Endothelial cell of umbilical vein (primary cell): ENCODE measurements at regions of chr2 and their contacts with region 1.

Region 1: GRCh38 chr2:58448065-58448507 is 207.0 kb upstream of the FANCL start:
- DNase-seq: peak; percentile 74
- H3K4me3 ChIP-seq: no peak overlapping the region
- H3K27ac ChIP-seq: no peak overlapping the region
- H3K4me1 ChIP-seq: no peaks in the 10 kb centered on the region
- H3K27me3 ChIP-seq: peaks cover 1 to 6% of the 10 kb centered on the region in 2 experiments
- CTCF ChIP-seq: peak; percentile 36 to 63
- POLR2A ChIP-seq: no peak

Region 2: GRCh38 chr2:57720728-57721627 is 727.1 kb before region 1 on chr2:
- CTCF ChIA-PET with region 1: interaction called, 17 read pairs
- POLR2A ChIA-PET with region 1: no interaction called
- dilution Hi-C with region 1: no loop called
- intact Hi-C with region 1: no loop called
- DNase-seq: peak; percentile 61
- H3K4me3 ChIP-seq: no peak overlapping the region
- H3K27ac ChIP-seq: no peak overlapping the region
- H3K4me1 ChIP-seq: no peaks in the 10 kb centered on the region
- H3K27me3 ChIP-seq: no peaks in the 10 kb centered on the region
- CTCF ChIP-seq: peak; percentile 65 to 80
- POLR2A ChIP-seq: no peak

Region 3: DNA sequence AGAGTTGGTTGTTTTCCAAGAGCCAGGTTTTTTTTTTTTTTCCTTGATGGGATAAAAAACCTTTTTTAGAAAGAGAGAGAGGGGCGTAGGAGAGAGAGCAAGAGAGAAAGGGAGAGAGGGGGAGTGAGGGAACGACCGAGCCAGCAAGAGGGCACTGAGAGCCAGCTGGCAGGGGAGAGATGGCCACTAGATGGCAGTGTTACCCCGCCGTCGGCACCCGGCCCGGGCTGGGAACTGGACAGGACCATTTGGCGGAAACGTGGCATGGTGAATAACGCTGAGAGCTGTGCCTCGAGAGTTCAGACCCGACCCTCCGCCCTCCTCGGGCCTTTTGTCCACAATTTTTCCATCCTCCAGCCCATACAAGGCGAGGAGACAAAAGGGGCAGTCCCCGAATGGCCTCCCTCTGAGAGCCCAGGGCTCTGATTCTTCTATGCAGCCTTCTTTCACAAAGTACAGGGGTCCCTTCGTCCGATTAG is 688.2 kb before region 1 on chr2:
- CTCF ChIA-PET with region 1: interaction called, 67 read pairs
- POLR2A ChIA-PET with region 1: no interaction called
- dilution Hi-C with region 1: no loop called
- intact Hi-C with region 1: loop called (anchors 1 kb)
- DNase-seq: peak; percentile 77
- H3K4me3 ChIP-seq: peak overlapping the region in 1 of 3 experiments; percentile 23
- H3K27ac ChIP-seq: no peak overlapping the region
- H3K4me1 ChIP-seq: peaks cover 4% of the 10 kb centered on the region
- H3K27me3 ChIP-seq: peaks cover 1 to 5% of the 10 kb centered on the region in 2 experiments
- CTCF ChIP-seq: peak; percentile 85 to 96
- POLR2A ChIP-seq: no peak

Region 4: DNA sequence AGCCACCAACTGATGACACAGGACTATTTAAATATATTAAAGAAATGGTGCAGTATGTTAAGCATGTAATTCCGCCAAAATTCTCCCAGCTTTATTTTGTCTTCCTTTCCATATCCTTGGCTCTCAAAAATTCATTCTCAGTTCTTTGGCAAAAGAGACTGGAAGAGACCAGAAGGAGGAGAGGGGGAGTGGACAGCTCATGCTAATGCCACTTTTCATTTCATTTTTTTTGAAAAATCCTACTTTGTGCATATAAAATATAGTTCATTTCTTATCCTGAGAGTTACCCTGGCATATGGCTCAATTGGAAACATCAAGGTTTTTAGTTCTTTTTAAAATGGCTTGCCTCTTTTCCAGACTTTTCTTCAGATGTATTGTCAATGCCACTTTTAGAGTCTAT is 530.0 kb before region 1 on chr2:
- CTCF ChIA-PET with region 1: interaction called, 231 read pairs
- POLR2A ChIA-PET with region 1: no interaction called
- dilution Hi-C with region 1: no loop called
- intact Hi-C with region 1: no loop called
- DNase-seq: no peak
- H3K4me3 ChIP-seq: no peak overlapping the region
- H3K27ac ChIP-seq: no peak overlapping the region
- H3K4me1 ChIP-seq: no peaks in the 10 kb centered on the region
- H3K27me3 ChIP-seq: no peaks in the 10 kb centered on the region
- CTCF ChIP-seq: no peak
- POLR2A ChIP-seq: no peak

Region 5: GRCh38 chr2:58046585-58047372 is 401.3 kb before region 1 on chr2 and contains the start of gene VRK2:
- CTCF ChIA-PET with region 1: no interaction called
- POLR2A ChIA-PET with region 1: no interaction called
- dilution Hi-C with region 1: no loop called
- intact Hi-C with region 1: loop called (anchors 10 kb)
- DNase-seq: peak; percentile 94
- H3K4me3 ChIP-seq: peak within 1 kb of the TSS; percentile 60 to 74 (median 68)
- H3K27ac ChIP-seq: peak within 1 kb of the TSS; percentile 97
- H3K4me1 ChIP-seq: peaks cover 45% of the 10 kb centered on the region
- H3K27me3 ChIP-seq: no peaks in the 10 kb centered on the region
- CTCF ChIP-seq: no peak
- POLR2A ChIP-seq: peak; percentile 92
- total RNA-seq, gene VRK2: 35.2 and 42.0 TPM in 2 replicates

Region 6: DNA sequence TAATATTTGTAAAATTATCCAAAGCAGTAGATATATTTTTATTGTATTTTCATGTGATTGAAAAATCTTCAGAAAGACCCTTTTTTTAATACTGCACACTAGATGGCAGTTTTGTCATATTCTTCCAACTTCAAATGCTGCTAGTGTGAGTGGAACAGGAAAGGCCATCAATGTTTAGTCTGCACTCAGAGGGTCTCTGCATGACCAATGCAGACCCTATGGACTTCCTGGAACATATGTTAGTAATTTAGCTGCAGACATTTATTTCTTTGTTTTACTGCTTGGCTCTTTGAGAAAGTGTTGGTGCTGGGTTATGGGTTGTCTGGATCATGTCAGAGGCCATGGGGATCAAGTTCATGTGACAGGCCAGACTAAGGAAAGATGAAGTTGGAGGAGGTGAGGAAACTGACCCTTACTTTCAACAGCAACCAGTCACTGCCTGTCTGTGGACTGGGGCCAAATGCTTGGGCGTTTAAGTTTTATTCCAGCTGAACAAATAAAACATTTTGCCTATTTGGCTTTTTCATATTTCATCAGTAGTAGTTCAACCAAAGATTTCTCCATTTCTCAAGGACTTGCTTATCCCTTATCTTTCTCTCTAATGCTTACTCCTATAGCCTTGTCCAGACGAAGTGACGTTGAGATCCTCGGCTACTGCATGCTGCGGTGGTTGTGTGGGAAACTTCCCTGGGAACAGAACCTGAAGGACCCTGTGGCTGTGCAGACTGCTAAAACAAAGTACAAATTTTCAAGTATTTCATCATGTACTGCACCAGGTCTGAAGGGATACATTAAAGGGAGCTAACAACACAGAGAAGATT is 316.7 kb before region 1 on chr2:
- CTCF ChIA-PET with region 1: interaction called, 17 read pairs
- POLR2A ChIA-PET with region 1: no interaction called
- dilution Hi-C with region 1: no loop called
- intact Hi-C with region 1: loop called (anchors 1 kb)
- DNase-seq: peak; percentile 46
- H3K4me3 ChIP-seq: no peak overlapping the region
- H3K27ac ChIP-seq: no peak overlapping the region
- H3K4me1 ChIP-seq: peaks cover 3% of the 10 kb centered on the region
- H3K27me3 ChIP-seq: no peaks in the 10 kb centered on the region
- CTCF ChIP-seq: no peak
- POLR2A ChIP-seq: no peak